Thyroid gland (tissue), 4 donors: ENCODE measurements at regions of chr15 and their contacts with region 1.

Region 1: DNA sequence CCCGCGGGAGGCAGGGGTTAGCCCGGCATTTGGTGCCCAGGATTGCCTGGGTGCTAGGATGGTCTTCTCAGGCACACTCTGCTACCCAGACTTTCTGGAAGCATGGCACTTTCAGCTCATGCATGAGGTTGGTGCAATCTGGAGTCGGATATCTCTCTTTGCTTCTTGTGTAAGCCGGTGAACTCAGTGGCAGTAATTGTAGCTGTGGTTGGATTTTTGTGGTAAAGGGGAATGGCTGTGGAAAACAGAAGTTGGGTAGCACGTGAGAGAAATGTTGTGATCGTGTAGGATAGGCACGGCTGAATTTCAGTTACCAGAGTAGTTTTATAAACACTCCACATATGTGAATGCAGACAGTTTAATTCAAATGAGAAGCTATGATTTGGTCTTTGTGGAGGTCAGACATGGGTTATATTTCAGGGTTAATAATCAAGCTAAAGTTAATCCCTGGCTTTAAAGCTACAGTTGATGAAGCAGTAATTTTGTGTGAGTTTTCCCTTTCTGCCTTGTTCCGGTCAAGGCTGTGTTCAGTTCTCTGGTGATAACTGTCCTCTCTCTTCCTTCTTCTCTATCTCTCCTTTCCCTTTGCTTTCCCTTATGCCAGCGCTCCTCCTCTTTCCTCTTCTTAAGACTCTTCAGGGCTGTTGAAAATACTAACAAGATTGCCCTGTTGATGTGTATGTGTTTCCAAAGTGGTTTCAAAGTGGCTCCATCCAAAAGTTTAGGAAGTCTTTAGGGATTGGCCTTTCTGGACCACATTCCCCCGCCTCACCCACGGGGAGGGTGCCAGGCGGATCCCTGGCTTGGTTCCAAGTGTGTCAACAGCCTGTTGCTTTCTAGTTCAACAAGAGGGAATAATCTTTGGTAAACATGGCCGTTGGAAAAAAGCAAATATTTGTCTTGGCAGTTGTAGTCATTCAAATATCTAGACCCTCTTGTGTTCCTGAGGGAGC is 404.7 kb upstream of the C2CD4B start:
- DNase-seq: peak; percentile 65 to 69
- H3K4me3 ChIP-seq: no peak overlapping the region
- H3K27ac ChIP-seq: peak overlapping the region in 2 of 3 donors; percentile 29 to 47
- H3K4me1 ChIP-seq: peaks cover 17 to 26% of the 10 kb centered on the region in 2 donors
- H3K27me3 ChIP-seq: no peaks in the 10 kb centered on the region
- CTCF ChIP-seq: no peak
- POLR2A ChIP-seq: no peak

Region 2: DNA sequence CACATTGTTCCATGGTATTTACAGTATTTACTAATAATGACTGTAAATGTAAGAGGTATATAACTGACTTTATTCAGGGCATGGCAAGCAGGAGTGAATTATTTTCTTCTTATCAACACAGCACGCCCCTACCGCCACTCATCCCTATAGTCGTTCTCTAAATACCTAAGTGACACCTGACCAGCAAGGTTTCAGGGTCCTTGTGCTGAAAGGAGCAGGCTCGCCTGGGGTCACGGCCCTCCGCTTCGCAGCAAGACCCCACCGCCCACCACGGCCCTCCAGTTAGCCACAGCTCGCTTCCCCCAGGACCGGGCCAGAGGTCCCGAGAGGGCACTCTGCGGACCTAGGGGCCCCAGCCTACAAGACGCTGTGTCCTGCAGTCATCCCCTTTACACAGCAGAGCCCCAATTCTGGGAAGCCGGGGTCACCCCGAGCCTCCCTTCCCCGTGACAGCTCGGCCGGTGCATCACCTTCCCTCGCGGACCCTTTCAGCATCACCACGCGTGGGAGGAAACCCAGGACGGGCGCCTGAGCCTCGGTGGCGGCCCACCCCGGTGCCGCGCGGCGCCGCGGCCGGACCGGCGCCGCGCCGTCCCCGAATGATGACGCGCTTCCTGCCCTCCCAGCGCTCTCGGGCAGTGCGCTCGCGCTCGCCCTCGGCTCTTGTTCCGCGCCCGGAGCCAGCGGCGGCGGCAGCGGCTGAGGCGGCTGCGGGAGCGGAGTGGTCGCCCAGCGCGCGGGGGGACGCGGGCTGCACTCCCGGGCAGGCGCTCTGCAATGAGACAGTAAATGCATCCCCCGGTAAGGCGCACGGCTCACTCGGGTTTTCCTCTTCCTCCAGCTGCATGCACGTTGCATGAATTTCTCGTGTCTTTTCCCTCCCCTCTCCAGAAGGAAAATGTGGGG is 179.6 kb before region 1 on chr15:
- intact Hi-C with region 1: loop called (anchors 5 kb)
- DNase-seq: peak; percentile 66 to 67
- H3K4me3 ChIP-seq: peak within 1 kb of the TSS; percentile 27 to 98 (median 67)
- H3K27ac ChIP-seq: peak within 1 kb of the TSS; percentile 3 to 77 (median 64)
- H3K4me1 ChIP-seq: peaks cover 10 to 11% of the 10 kb centered on the region in 2 donors
- H3K27me3 ChIP-seq: no peaks in the 10 kb centered on the region
- CTCF ChIP-seq: peak in 1 of 6 experiments; percentile 2
- POLR2A ChIP-seq: peak in 1 of 2 donors; percentile 83